Aorta (tissue), 5 donors: ENCODE measurements at regions of chr5 and their contacts with region 1.

Region 1: GRCh38 chr5:157384971-157385709 is 74.9 kb upstream of the NIPAL4 start:
- DNase-seq: peak; percentile 81 to 87
- ATAC-seq: peak; percentile 76
- H3K4me3 ChIP-seq: peak overlapping the region in 1 of 2 donors; percentile 30
- H3K27ac ChIP-seq: peak overlapping the region; percentile 96 to 97
- H3K4me1 ChIP-seq: peaks cover 6 to 12% of the 10 kb centered on the region in 2 donors
- H3K27me3 ChIP-seq: no peaks in the 10 kb centered on the region

Region 2: DNA sequence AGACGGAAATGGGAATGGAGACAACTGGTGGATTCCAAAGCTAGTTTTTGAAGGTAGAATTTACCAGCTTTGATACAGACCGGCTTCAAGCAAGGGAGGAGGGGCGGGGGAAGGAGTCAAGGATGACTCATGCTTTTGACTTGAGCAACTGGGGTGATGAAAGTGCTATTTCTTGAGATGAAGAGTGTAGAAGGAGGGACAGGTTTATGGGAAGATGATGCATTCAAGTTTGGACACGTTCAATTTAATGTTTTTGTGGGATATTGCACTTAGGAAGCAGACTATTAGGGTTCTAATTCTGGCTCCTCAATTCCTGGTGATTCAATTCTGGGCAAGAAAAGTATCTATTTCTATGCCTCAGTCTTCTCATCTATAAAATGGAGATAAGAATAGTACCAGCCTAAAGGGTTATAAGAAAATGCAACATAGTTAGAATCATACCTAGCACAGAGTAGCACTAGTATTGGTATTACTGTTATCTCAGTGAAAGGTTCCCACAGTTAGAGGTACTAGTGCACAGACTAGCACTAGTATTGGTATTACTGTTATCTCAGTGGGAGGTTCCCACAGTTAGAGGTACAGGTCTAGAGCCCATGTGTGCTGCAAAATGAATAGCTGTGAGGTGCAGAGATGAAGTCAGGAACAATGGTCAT is 79.5 kb after region 1 on chr5:
- intact Hi-C with region 1: loop called in 1 of 2 experiments (anchors 5 kb)
- DNase-seq: peak; percentile 59 to 79
- ATAC-seq: peak; percentile 66
- H3K4me3 ChIP-seq: no peak overlapping the region
- H3K27ac ChIP-seq: no peak overlapping the region
- H3K4me1 ChIP-seq: no peaks in the 10 kb centered on the region
- H3K27me3 ChIP-seq: no peaks in the 10 kb centered on the region

Region 3: DNA sequence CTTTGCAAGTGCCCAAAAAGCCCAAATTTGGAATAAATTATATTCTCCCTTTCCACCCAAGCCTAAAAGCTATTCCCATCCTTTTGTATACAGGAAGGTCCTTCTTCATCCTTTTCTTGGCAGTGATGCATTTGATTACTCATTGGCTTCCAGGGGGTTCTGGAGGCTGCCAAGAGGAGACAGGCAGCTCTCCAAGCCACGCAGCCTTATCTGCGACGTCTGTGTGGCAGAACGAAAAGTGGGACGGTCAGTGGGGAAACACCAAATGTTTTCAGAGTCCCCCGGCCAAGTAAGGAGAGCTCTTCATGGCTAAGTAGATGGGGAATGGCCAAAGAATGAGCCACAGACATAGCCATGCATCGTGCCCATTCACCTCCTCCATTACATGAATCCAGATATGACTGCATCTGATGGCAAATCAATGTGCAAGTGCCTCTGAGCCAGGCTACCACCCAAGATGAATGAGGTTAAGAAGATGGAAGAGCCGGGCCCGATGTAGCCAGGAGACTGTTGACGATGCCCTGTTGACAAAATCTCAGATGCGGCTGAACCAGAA is 178.3 kb after region 1 on chr5:
- intact Hi-C with region 1: loop called in 1 of 2 experiments (anchors 10 kb)
- DNase-seq: peak; percentile 68 to 85
- ATAC-seq: peak; percentile 65
- H3K4me3 ChIP-seq: no peak overlapping the region
- H3K27ac ChIP-seq: peak overlapping the region; percentile 73 to 96
- H3K4me1 ChIP-seq: peaks cover 7 to 9% of the 10 kb centered on the region in 2 donors
- H3K27me3 ChIP-seq: no peaks in the 10 kb centered on the region